ENCODE measurements at regions of chr1 and their contacts with region 1.

Region 1: GRCh38 chr1:61453111-61453961 is 271.6 kb downstream of the TM2D1 start:
- DNase-seq: peak; percentile 90
- ATAC-seq: peak; percentile 77

Region 2: DNA sequence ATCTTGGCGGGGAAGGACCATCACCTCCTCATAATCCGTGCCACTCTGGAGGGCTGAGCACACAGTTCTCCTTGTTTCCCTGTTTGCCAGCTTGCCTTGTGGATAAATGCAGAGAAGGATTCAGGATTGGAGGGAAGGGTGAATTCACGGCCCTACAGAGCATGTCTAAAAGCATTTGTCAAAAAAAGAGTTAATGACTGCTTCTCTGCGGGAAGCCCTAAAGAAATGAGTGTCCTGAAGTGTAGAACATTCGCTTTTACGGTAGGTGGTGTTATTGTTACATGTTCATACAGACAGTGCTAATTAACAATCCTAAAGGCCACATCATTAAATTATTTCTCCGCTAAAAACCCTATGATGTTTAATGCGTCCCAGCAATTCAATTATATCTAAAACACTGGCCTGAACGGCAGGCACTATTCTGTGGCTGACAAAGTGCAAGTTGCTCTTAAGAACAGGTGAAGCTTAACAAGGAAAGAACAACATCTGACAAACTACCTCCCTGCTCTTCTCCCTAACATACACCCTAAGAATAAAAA is 483.3 kb before region 1 on chr1:
- intact Hi-C with region 1: loop called (anchors 5 kb)
- DNase-seq: no peak
- ATAC-seq: peak; percentile 69

Region 3: DNA sequence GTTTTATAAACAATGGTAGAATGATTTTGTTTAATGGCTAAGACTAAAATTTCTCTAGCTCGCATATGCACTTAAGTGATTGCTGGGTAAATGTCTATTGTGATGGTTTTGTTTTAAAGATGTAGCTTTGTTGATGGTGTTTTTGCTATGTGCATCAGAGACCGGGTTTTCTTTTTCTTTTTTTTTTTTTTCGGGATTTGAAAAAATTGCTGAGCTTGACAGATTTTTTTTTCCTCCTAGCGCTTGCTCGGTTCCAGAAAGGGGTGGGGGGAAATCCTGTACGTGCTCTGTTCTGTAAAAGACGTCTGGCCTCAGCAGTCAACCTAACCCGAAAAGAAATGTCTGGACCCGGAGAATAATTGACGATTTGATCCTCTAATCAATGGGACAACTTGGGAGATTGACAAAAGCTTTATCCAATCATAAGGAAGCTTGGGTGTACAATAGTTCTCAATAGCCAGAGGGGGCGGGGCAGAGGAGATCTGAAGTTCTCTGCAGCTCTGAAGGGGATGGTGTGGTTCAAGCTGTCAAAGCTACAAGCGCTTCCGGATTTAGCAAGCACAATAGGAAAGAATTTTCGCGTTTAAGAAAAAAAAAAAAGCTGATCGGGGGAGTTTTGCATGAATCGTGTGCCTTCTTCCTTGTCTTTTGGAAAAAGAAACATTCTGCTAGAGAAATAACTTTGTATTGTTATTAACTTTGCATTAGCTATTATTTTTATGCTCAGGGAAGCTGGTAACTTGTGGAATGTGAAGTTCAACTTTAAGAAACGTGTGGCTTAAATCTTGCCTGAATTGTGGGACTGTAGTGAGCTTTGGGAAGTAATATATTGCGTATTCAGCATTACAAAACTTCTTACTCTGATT is 375.4 kb before region 1 on chr1:
- intact Hi-C with region 1: loop called (anchors 2 kb)
- DNase-seq: peak; percentile 95
- ATAC-seq: peak; percentile 80

Region 4: DNA sequence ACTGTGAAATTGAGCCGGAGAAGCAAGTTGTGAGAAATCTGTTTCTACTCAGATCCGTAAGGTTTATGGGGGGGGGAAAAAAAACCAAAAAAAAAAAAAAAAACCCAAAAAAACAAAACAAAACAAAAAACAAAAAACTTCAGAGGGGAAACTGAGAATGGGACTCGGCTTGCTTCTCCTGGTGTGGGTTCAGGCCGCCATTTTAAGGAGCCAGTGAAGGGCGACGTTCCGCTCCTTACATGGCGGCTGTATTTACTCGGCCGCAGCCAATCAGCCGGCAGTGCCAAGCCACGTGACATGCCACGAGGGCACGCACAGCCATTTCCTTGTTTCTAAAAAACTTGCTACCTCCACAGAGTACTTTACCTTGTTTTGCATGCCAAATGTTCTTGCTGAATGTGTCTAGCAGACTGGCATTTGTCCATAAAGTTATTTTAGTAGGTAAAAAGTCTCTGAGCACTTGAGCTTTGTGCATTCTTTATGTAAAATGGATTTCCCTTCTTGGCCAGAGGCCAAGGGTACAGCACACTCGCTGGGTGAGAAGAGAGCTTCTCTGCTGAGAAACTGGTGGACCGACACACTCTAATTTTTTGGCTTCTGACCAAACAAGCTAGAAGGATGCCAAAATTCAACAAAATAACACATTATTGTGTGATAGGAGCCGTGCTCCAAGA is 269.2 kb before region 1 on chr1:
- intact Hi-C with region 1: loop called (anchors 5 kb)
- DNase-seq: peak; percentile 95
- ATAC-seq: peak; percentile 90

Region 5: DNA sequence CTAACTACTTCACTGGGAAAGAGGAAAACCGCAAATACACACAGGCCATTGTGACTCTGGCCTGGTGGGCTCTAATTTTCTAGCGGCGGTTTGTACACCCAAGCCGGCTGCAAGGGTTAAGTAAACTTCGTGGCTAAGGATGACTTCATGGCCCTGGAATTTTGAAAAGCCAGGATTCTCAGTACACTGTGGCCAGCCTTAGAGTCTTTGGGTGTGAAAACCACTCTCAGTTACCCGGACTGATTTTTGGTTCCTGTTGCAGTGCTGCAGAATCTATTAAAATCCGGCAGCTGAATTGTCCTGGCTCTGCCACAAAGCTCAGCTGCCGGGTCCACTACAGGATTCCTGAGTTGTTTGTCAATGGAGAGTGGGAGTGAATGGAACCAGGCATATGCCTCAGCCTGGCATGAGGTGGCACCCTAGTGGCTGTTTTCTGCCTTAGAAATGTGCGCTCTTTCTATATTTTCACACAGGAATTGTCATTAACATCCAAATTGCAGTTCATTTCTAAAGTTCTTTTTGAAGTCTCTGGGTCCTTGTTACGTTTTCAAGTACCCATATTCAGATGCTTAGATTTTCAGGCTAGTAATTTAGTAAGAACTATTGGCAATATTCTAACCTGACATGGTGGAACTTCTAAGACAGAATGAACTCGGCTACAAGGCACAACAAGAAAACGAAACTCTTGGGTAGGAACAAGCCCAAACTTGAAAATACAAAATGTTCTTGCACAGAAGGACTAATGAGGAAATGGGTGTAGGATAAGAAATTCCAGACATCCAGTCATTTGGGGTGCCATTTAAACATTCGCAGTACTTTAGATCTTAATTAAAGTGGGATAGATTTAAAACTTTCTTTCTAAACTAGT is 115.1 kb before region 1 on chr1:
- intact Hi-C with region 1: loop called (anchors 1 kb)
- DNase-seq: peak; percentile 73
- ATAC-seq: peak; percentile 84

Region 6: GRCh38 chr1:61397935-61398334 is 55.4 kb before region 1 on chr1:
- intact Hi-C with region 1: no loop called
- DNase-seq: no peak
- ATAC-seq: no peak

Region 7: GRCh38 chr1:61424382-61424781 is 29.0 kb before region 1 on chr1:
- intact Hi-C with region 1: loop called (anchors 2 kb)
- DNase-seq: no peak
- ATAC-seq: no peak

Region 8: DNA sequence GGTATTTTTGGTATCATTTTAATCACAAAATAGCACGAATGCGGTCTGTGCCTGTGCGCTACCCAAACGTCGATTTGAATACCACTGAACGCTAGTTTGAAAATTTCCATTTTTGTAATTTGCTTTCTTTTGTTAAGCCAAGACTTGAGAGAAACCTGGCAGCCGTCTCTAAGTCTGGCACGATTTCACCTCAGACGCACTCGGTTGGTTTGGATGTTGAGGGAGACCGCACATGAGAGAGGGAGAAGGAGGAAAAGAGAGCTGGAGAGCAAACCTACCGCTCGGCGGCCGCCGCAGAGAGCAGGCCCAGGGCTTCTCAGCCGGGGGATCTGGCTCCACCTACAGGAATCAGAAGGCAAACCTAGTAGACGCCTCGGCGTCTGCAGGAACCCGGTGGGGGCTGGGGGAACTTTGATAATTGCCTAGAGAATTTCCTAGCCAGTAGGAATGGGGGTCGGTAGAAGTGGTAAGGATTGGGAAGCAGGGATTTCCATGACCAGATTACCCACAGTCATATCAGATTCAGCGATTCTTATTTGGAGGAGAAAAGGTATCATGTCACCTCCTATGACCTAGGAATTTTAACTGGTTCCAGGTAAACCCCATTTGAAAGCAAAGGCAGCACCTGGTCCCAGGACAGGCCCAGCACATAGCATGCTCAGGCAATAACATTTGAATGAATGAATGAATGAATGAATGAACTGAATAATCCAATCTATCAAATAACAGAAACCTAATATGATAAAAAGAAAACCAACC is 188.4 kb after region 1 on chr1:
- intact Hi-C with region 1: loop called (anchors 2 kb)
- DNase-seq: peak; percentile 92
- ATAC-seq: peak; percentile 79

Region 9: GRCh38 chr1:61741711-61742619 is 288.6 kb after region 1 on chr1 and contains the start of gene PATJ:
- intact Hi-C with region 1: no loop called
- DNase-seq: peak; percentile 68
- ATAC-seq: peak; percentile 76
- total RNA-seq, gene PATJ: 121 TPM

Measured in Right ventricle myocardium inferior (tissue), 1 donor.